Naive thymus-derived CD4-positive, alpha-beta T cell (primary cell): ENCODE measurements at regions of chr5 and their contacts with region 1.

Region 1: DNA sequence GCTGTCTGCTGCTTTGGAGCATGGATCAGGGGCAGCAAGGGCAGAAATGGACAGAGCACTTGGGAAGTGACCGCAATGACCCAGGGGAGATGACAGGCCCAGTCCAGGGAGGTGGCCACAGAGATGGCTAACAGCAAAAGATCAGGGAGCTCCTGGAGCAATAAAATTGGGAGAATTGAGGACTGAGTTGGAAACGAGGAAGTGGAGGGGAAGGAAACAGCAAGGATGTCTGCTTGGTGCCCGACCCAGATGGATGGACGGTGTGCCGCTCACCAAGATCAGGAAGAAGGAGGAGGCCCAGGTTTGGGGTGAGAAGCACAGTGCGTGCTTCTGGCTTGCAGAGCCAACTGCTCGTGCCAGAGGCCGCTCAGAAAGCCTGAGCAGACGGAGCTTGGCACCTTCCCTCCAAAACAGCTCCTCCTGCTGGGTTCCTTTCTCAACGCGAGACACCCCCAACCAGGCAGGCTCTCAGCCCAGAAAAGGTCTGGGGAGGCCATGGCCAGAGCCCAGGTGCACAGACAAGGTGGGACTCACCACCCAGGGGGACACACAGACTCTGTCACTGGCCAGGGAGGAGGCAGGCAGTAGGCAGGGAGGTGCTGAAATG is 1.7 kb upstream of the SLC34A1 start:
- DNase-seq: peak in 7 of 9 donors; percentile 48 to 72 (median 60)
- ATAC-seq: peak; percentile 66
- H3K4me3 ChIP-seq: no peak overlapping the region
- H3K4me3 Mint-ChIP-seq: peak overlapping the region in 8 of 10 donors; percentile 5 to 76 (median 42)
- H3K27ac ChIP-seq: no peak overlapping the region
- H3K27ac Mint-ChIP-seq: peak overlapping the region in 7 of 9 donors; percentile 23 to 86 (median 66)
- H3K4me1 ChIP-seq: peaks cover 6 to 14% of the 10 kb centered on the region in 2 donors
- H3K4me1 Mint-ChIP-seq: peaks cover 24 to 54% (median 37%) of the 10 kb centered on the region in 7 donors
- H3K27me3 ChIP-seq: no peaks in the 10 kb centered on the region
- H3K27me3 Mint-ChIP-seq: peaks cover 0 to 4% (median 0%) of the 10 kb centered on the region in 5 donors

Region 2: DNA sequence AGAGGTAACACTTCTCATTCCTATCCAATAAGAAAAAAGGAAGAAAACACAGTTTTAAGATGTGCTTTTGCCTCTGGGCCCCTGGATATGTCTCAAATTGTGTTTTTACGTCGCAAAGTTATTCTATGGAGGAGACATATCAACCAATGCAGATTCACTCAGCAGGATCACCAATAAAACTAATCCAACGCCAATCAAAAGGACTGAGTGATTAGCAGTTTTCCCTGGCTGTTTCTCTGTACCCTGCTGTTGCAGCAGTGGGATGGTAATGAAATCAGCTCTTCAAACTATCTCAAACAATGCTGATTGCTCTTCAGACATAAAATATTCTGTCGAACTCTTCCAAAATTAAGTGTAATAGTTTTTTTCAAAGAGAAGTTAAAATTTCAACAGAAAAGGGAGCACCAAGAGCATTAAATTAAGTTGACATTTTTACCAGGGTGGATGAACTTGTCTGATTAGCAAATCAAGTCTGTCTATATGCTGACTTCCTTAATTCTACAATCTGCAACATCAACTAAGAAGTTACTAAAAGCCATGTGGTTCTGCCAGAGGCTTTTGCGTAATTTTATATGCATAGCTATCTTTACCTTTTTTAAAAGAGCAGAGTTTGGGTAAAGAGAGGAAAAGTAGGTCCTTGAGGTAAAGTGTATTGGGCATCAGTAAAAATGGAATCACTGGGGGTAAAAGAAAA is 473.7 kb before region 1 on chr5:
- CTCF ChIA-PET with region 1: no interaction called
- POLR2A ChIA-PET with region 1: no interaction called
- intact Hi-C with region 1: no loop called
- DNase-seq: no peak
- ATAC-seq: no peak
- H3K4me3 ChIP-seq: no peak overlapping the region
- H3K4me3 Mint-ChIP-seq: no peak overlapping the region
- H3K27ac ChIP-seq: no peak overlapping the region
- H3K27ac Mint-ChIP-seq: peak overlapping the region in 4 of 9 donors; percentile 8 to 38 (median 15)
- H3K4me1 ChIP-seq: no peaks in the 10 kb centered on the region
- H3K4me1 Mint-ChIP-seq: peaks cover 0 to 15% (median 1%) of the 10 kb centered on the region in 7 donors
- H3K27me3 ChIP-seq: no peaks in the 10 kb centered on the region
- H3K27me3 Mint-ChIP-seq: no peaks in the 10 kb centered on the region

Region 3: DNA sequence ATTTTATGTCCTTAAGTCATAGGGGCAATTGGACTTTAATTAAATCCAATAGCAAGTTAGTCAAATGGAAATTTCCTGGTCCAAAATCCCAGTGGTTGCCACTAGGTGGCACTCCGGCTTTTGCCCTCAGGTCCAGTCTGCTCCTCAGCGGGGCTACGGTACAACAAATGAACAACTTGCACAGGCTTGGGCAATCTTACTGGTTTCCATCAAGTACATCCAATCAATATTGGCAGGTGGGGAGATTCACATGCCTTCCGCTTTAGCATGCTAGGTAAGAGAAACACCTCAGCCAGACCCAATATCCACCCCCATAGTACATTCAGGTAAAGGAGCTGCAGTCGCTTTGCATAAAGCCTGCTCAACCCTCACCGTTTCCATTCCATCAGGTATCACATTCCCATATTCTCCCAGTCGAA is 64.6 kb before region 1 on chr5:
- CTCF ChIA-PET with region 1: interaction called, 16 read pairs
- POLR2A ChIA-PET with region 1: interaction called, 5 read pairs
- intact Hi-C with region 1: loop called (anchors 1 kb)
- DNase-seq: peak; percentile 41 to 73 (median 69)
- ATAC-seq: peak; percentile 84
- H3K4me3 ChIP-seq: no peak overlapping the region
- H3K4me3 Mint-ChIP-seq: no peak overlapping the region
- H3K27ac ChIP-seq: no peak overlapping the region
- H3K27ac Mint-ChIP-seq: peak overlapping the region in 2 of 9 donors; percentile 32 to 37
- H3K4me1 ChIP-seq: peaks cover 1% of the 10 kb centered on the region in 2 donors
- H3K4me1 Mint-ChIP-seq: peaks cover 0 to 49% (median 20%) of the 10 kb centered on the region in 7 donors
- H3K27me3 ChIP-seq: no peaks in the 10 kb centered on the region
- H3K27me3 Mint-ChIP-seq: no peaks in the 10 kb centered on the region

Region 4: GRCh38 chr5:177362610-177363507 is 19.7 kb before region 1 on chr5:
- CTCF ChIA-PET with region 1: interaction called, 10 read pairs
- POLR2A ChIA-PET with region 1: interaction called, 15 read pairs
- intact Hi-C with region 1: loop called in 1 of 2 experiments (anchors 2 kb)
- DNase-seq: peak; percentile 32 to 79 (median 55)
- ATAC-seq: peak; percentile 80
- H3K4me3 ChIP-seq: peak overlapping the region; percentile 61
- H3K4me3 Mint-ChIP-seq: peak overlapping the region; percentile 83 to 97 (median 90)
- H3K27ac ChIP-seq: peak overlapping the region; percentile 88
- H3K27ac Mint-ChIP-seq: peak overlapping the region; percentile 82 to 94 (median 91)
- H3K4me1 ChIP-seq: peaks cover 53 to 61% of the 10 kb centered on the region in 2 donors
- H3K4me1 Mint-ChIP-seq: peaks cover 42 to 78% (median 64%) of the 10 kb centered on the region in 7 donors
- H3K27me3 ChIP-seq: no peaks in the 10 kb centered on the region
- H3K27me3 Mint-ChIP-seq: no peaks in the 10 kb centered on the region

Region 5: DNA sequence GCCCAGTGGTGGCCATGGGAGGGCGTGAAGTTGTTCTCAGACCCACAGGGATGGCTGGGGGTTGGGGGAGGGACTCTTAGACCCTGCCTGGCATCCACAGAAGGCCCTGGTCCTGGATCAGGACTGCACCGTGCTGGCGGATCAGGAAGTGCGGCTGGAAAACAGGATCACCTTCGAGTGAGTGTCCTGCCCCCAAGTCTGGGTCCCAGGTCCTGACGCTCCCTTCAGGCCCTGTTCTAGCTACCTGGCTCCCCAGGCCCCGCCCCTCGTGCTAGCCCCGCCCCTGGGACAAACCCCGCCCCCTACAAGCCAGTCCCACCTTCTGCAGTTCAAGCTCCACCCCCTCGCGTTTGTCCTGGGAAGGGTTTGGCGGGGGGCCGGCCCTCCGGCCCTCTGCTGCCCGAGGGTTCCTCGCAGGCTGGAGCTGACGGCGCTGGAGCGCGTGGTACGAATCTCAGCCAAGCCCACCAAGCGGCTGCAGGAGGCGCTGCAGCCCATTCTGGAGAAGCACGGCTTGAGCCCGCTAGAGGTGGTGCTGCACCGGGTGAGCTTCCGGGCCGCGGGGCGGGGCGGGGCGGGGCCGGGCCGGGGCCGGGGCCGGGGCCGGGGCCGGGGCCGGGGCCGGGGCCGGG is 11.9 kb before region 1 on chr5:
- CTCF ChIA-PET with region 1: interaction called, 75 read pairs
- POLR2A ChIA-PET with region 1: interaction called, 52 read pairs
- intact Hi-C with region 1: loop called in 1 of 2 experiments (anchors 1 kb)
- DNase-seq: peak in 7 of 9 donors; percentile 36 to 74 (median 65)
- ATAC-seq: peak; percentile 90
- H3K4me3 ChIP-seq: no peak overlapping the region
- H3K4me3 Mint-ChIP-seq: peak overlapping the region in 7 of 10 donors; percentile 20 to 79 (median 64)
- H3K27ac ChIP-seq: peak overlapping the region; percentile 76
- H3K27ac Mint-ChIP-seq: peak overlapping the region in 7 of 9 donors; percentile 33 to 94 (median 86)
- H3K4me1 ChIP-seq: peaks cover 36 to 73% of the 10 kb centered on the region in 2 donors
- H3K4me1 Mint-ChIP-seq: peaks cover 51 to 80% (median 70%) of the 10 kb centered on the region in 7 donors
- H3K27me3 ChIP-seq: no peaks in the 10 kb centered on the region
- H3K27me3 Mint-ChIP-seq: no peaks in the 10 kb centered on the region